Left ventricle myocardium superior (tissue), 1 donor: ENCODE measurements at regions of chr4 and their contacts with region 1.

Region 1: DNA sequence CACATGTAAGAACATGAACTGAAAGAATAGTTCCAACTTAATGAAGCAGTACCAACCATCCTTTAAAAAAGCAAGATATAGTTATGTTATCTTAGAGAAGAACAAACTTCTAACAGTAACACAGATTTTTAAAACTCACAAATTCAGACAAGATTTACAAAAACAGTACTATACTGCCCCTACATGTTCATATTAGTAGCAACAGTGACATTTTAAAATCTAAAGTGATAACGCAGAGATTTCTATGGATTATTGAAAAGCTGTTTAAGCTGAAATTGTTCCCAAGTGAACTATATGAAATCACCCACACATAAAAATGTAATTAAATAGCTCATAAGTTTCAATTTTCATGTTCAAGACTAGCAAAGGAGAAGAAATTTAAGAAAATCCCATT is 166.0 kb downstream of the FBXW7 start:
- DNase-seq: no peak
- ATAC-seq: no peak

Region 2: GRCh38 chr4:152106113-152106763 is 263.7 kb before region 1 on chr4:
- intact Hi-C with region 1: loop called (anchors 10 kb)
- DNase-seq: peak; percentile 62
- ATAC-seq: peak; percentile 38